ENCODE measurements at regions of chr11 and their contacts with region 1.

Region 1: DNA sequence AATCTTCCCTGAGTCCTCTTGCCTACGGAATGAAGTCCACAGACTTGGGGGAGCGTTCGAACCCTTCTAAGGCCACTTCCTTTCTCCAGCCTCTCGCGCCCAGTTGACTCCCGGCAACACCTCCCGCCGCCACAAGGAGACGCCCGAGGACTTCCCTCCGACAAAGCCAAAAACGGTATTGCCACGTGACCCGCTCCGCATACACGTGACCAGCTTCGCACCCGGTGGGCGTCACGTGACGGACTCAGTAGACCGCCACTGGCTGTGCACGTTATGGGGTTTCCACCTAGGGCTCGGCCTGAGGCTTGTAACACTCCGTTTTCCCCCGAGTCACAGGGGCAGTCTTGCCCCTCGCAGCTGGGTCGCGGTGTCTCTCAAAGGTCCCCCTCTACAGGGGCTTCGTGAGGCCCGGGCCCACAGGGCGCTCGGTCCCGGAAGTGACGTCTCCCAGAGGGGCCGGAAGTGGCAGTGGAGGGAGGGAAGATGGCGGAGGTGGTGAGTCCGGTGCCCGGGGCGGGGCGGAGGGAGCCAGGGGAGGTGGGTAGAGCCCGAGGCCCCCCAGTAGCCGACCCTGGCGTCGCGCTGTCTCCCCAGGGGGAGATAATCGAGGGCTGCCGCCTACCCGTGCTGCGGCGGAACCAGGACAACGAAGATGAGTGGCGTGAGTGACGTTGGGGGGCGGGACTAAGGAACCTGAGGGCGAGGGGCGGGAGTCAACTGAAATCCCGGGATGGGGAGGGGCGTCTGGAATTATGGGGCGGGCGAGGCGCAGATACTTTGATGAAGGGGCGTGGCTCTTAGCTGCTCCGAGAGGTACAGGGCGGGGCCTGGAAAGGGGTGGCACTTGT is at the start of gene KAT5:
- DNase-seq: peak; percentile 98
- ATAC-seq: peak; percentile 92 to 96 (median 95)
- H3K4me3 ChIP-seq: peak within 1 kb of the TSS; percentile 39 to 82 (median 68)
- H3K27ac ChIP-seq: peak within 1 kb of the TSS; percentile 84 to 100 (median 98)
- H3K4me1 ChIP-seq: peaks cover 0 to 31% (median 21%) of the 10 kb centered on the region in 9 donors
- H3K27me3 ChIP-seq: no peaks in the 10 kb centered on the region
- CTCF ChIP-seq: peak; percentile 94 to 99 (median 98)
- total RNA-seq, gene KAT5: 40.9 to 53.6 (median 44.0) TPM

Region 2: GRCh38 chr11:65636108-65636833 is 75.7 kb before region 1 on chr11:
- intact Hi-C with region 1: no loop called
- DNase-seq: no peak
- ATAC-seq: no peak
- H3K4me3 ChIP-seq: no peak overlapping the region
- H3K27ac ChIP-seq: peak overlapping the region in 6 of 10 donors; percentile 14 to 98 (median 96)
- H3K4me1 ChIP-seq: peaks cover 20 to 45% (median 41%) of the 10 kb centered on the region in 9 donors
- H3K27me3 ChIP-seq: no peaks in the 10 kb centered on the region
- CTCF ChIP-seq: no peak

Region 3: DNA sequence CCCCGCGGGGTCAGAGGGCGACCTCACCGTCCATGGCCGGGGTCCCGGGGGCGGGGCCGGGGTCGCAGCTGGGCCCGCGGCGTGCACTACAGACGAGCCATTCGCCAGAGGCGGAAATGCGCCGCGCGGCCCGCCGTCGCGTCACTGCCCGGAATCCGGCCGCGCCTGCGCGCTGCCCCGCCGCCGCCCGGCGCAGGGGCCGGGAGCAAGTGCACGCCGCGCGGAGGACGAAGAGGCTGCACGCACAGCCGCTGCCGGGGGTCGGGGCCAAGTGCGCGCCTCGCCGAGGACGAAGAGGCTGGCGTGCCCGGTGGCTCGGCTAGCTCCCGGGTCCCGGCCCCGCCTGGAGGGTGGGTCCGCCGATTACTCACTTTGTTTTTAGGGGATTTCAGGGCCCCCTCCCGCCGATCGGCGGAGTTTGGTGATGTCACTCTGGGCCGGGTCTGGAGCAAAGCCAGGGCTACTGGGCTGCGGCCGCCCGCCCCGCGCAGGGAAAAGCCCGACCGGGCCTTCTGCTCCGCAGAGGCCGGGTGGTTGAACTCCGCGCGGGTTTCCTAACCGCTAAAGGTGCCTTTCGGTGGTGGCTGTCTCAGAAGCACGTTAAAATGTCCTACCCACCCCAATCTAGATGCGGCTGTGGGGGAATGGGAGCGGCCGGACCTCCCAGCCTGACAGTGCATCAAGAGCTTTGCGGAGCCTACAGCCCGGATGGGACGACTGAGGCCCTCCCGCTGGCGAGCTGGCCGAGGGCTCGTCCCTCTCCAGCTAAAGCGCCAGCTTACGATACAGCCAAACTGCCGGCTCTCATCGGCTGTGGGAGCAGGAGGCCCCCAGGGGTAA is 49.0 kb before region 1 on chr11 and contains the start of gene RELA:
- intact Hi-C with region 1: loop called in 1 of 10 experiments (anchors 5 kb)
- DNase-seq: peak; percentile 92 to 97
- ATAC-seq: peak; percentile 88 to 94 (median 90)
- H3K4me3 ChIP-seq: peak within 1 kb of the TSS; percentile 74 to 100 (median 92)
- H3K27ac ChIP-seq: peak within 1 kb of the TSS; percentile 96 to 100 (median 100)
- H3K4me1 ChIP-seq: peaks cover 7 to 42% (median 37%) of the 10 kb centered on the region in 9 donors
- H3K27me3 ChIP-seq: no peaks in the 10 kb centered on the region
- CTCF ChIP-seq: no peak
- total RNA-seq, gene RELA: 30.7 to 55.2 (median 40.0) TPM

Region 4: DNA sequence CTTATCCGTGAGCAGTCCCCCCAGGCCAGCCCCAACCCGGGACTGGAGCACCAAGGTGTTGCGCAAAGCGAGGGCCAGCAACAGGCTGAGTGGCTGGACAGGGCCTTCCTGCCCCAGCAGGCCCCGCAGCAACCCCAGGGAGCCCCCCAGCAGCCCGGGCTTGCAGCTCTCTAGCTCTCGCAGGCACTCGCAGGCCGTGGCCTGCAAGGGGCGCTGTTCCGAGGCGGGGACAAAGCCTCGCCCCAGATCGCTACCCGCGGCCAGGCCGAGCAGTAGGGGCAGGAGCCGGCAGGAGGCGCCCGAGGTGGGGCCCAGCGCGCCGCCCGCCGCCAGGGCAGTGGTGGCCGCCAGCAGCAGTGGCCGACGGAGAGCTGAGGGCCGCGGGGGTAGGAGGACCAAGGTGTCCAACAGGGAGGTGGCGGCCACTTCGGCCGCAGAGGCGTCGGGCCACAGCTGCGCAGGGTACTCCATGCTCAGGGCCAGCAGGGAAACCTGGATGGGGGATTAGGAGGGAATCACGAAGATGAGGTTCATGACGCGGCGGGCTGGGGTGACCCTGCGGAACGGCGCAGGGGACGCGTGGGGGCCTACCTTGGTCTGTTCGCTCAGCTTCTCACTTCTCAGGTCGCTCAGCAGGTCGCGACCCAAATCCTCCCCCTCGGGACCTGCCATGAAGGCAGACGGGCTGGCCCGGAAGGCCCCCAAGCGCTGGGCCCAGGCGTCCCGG is 68.0 kb after region 1 on chr11:
- intact Hi-C with region 1: loop called in 3 of 10 experiments (anchors 5 to 10 kb)
- DNase-seq: peak; percentile 69 to 82
- ATAC-seq: peak; percentile 81 to 92 (median 90)
- H3K4me3 ChIP-seq: peak overlapping the region; percentile 68 to 98 (median 92)
- H3K27ac ChIP-seq: peak overlapping the region in 9 of 10 donors; percentile 70 to 96 (median 82)
- H3K4me1 ChIP-seq: peaks cover 9 to 53% (median 16%) of the 10 kb centered on the region in 9 donors
- H3K27me3 ChIP-seq: peaks cover 0 to 11% (median 5%) of the 10 kb centered on the region in 7 donors
- CTCF ChIP-seq: peak; percentile 83 to 99 (median 95)

Measured in heart right ventricle (tissue), 16 donors.